Naive thymus-derived CD4-positive, alpha-beta T cell (primary cell): ENCODE measurements at regions of chr13 and their contacts with region 1.

Region 1: GRCh38 chr13:26498656-26499591 is 58.6 kb upstream of the WASF3 start:
- DNase-seq: no peak
- ATAC-seq: no peak
- H3K4me3 ChIP-seq: no peak overlapping the region
- H3K4me3 Mint-ChIP-seq: no peak overlapping the region
- H3K27ac ChIP-seq: no peak overlapping the region
- H3K27ac Mint-ChIP-seq: no peak overlapping the region
- H3K4me1 ChIP-seq: no peaks in the 10 kb centered on the region
- H3K4me1 Mint-ChIP-seq: peaks cover 4 to 15% (median 5%) of the 10 kb centered on the region in 7 donors
- H3K27me3 ChIP-seq: no peaks in the 10 kb centered on the region
- H3K27me3 Mint-ChIP-seq: peaks cover 0 to 9% (median 4%) of the 10 kb centered on the region in 5 donors

Region 2: GRCh38 chr13:26442541-26442940 is 56.4 kb before region 1 on chr13:
- CTCF ChIA-PET with region 1: no interaction called
- POLR2A ChIA-PET with region 1: no interaction called
- intact Hi-C with region 1: no loop called
- DNase-seq: no peak
- ATAC-seq: no peak
- H3K4me3 ChIP-seq: no peak overlapping the region
- H3K4me3 Mint-ChIP-seq: no peak overlapping the region
- H3K27ac ChIP-seq: no peak overlapping the region
- H3K27ac Mint-ChIP-seq: no peak overlapping the region
- H3K4me1 ChIP-seq: no peaks in the 10 kb centered on the region
- H3K4me1 Mint-ChIP-seq: no peaks in the 10 kb centered on the region
- H3K27me3 ChIP-seq: no peaks in the 10 kb centered on the region
- H3K27me3 Mint-ChIP-seq: peaks cover 2 to 30% (median 23%) of the 10 kb centered on the region in 5 donors

Region 3: GRCh38 chr13:26698392-26699196 is 199.7 kb after region 1 on chr13:
- CTCF ChIA-PET with region 1: interaction called, 3 read pairs
- POLR2A ChIA-PET with region 1: no interaction called
- intact Hi-C with region 1: loop called (anchors 1 kb)
- DNase-seq: peak; percentile 52 to 81 (median 79)
- ATAC-seq: peak; percentile 89
- H3K4me3 ChIP-seq: no peak overlapping the region
- H3K4me3 Mint-ChIP-seq: peak overlapping the region in 5 of 10 donors; percentile 28 to 45 (median 39)
- H3K27ac ChIP-seq: no peak overlapping the region
- H3K27ac Mint-ChIP-seq: no peak overlapping the region
- H3K4me1 ChIP-seq: no peaks in the 10 kb centered on the region
- H3K4me1 Mint-ChIP-seq: peaks cover 0 to 10% (median 5%) of the 10 kb centered on the region in 7 donors
- H3K27me3 ChIP-seq: no peaks in the 10 kb centered on the region
- H3K27me3 Mint-ChIP-seq: peaks cover 0 to 23% (median 3%) of the 10 kb centered on the region in 5 donors